Endothelial cell of umbilical vein (primary cell): ENCODE measurements at regions of chr3 and their contacts with region 1.

Region 1: GRCh38 chr3:101195951-101196713 is 124.2 kb downstream of the IMPG2 start:
- DNase-seq: peak; percentile 89
- H3K4me3 ChIP-seq: no peak overlapping the region
- H3K27ac ChIP-seq: peak overlapping the region; percentile 81
- H3K4me1 ChIP-seq: peaks cover 23% of the 10 kb centered on the region
- H3K27me3 ChIP-seq: no peaks in the 10 kb centered on the region
- CTCF ChIP-seq: peak; percentile 30 to 42
- POLR2A ChIP-seq: no peak

Region 2: DNA sequence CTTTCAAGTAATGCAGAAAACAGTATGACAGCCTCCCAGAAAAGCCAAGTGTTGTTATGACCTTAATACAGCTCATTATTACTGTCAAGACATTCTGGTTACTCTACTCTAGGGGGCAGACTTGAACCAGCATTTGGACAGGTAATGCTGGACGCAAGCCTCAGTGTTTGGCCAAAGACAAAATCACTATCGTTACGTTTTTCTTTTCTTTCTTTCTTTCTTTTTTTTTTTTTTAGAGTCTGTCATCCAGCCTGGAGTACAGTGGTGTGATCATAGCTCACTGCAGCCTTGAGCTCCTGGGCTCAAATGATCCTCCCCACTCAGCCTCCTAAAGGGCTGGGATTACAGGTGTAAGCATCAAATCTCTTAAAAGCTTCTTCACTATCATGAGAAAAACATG is 733.1 kb before region 1 on chr3:
- CTCF ChIA-PET with region 1: interaction called, 36 read pairs
- POLR2A ChIA-PET with region 1: no interaction called
- dilution Hi-C with region 1: no loop called
- intact Hi-C with region 1: loop called (anchors 5 kb)
- DNase-seq: peak; percentile 52
- H3K4me3 ChIP-seq: no peak overlapping the region
- H3K27ac ChIP-seq: no peak overlapping the region
- H3K4me1 ChIP-seq: no peaks in the 10 kb centered on the region
- H3K27me3 ChIP-seq: peaks cover 3 to 5% of the 10 kb centered on the region in 2 experiments
- CTCF ChIP-seq: peak; percentile 55 to 68
- POLR2A ChIP-seq: no peak

Region 3: GRCh38 chr3:100796556-100796955 is 399.6 kb before region 1 on chr3:
- CTCF ChIA-PET with region 1: interaction called, 26 read pairs
- POLR2A ChIA-PET with region 1: no interaction called
- dilution Hi-C with region 1: no loop called
- intact Hi-C with region 1: no loop called
- DNase-seq: peak; percentile 62
- H3K4me3 ChIP-seq: no peak overlapping the region
- H3K27ac ChIP-seq: no peak overlapping the region
- H3K4me1 ChIP-seq: peaks cover 12% of the 10 kb centered on the region
- H3K27me3 ChIP-seq: no peaks in the 10 kb centered on the region
- CTCF ChIP-seq: peak in 1 of 2 donors; percentile 21
- POLR2A ChIP-seq: no peak

Region 4: DNA sequence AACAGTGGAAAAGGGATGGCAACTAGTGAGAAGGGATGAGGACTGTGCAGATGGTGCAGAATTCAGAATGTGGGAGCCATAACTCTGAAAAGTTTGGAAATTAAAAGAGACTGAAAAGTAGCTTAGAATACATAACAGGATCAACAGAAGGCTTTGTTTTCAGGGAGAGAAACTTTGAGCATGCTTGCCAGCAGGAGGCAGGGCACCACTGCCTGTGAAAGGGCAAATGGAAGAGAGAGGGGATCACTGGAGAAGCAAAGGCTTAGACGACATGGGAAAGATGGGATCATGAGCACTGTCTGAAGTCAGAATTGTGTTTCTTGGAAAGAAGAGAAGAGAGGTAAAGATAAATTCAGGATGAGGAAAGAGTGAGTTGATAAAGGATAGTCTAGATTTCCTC is 302.5 kb before region 1 on chr3:
- CTCF ChIA-PET with region 1: interaction called, 257 read pairs
- POLR2A ChIA-PET with region 1: no interaction called
- dilution Hi-C with region 1: no loop called
- intact Hi-C with region 1: loop called (anchors 1 kb)
- DNase-seq: peak; percentile 74
- H3K4me3 ChIP-seq: no peak overlapping the region
- H3K27ac ChIP-seq: no peak overlapping the region
- H3K4me1 ChIP-seq: peaks cover 8% of the 10 kb centered on the region
- H3K27me3 ChIP-seq: no peaks in the 10 kb centered on the region
- CTCF ChIP-seq: peak; percentile 78 to 80
- POLR2A ChIP-seq: no peak

Region 5: GRCh38 chr3:100993309-100993708 is 202.8 kb before region 1 on chr3 and contains the start of gene ABI3BP:
- CTCF ChIA-PET with region 1: interaction called, 43 read pairs
- POLR2A ChIA-PET with region 1: no interaction called
- dilution Hi-C with region 1: no loop called
- intact Hi-C with region 1: loop called (anchors 2 kb)
- DNase-seq: peak; percentile 91
- H3K4me3 ChIP-seq: peak within 1 kb of the TSS; percentile 63 to 90 (median 77)
- H3K27ac ChIP-seq: peak within 1 kb of the TSS; percentile 51
- H3K4me1 ChIP-seq: peaks cover 14% of the 10 kb centered on the region
- H3K27me3 ChIP-seq: no peaks in the 10 kb centered on the region
- CTCF ChIP-seq: no peak
- POLR2A ChIP-seq: peak; percentile 74
- total RNA-seq, gene ABI3BP: 55.9 and 78.1 TPM in 2 replicates

Region 6: DNA sequence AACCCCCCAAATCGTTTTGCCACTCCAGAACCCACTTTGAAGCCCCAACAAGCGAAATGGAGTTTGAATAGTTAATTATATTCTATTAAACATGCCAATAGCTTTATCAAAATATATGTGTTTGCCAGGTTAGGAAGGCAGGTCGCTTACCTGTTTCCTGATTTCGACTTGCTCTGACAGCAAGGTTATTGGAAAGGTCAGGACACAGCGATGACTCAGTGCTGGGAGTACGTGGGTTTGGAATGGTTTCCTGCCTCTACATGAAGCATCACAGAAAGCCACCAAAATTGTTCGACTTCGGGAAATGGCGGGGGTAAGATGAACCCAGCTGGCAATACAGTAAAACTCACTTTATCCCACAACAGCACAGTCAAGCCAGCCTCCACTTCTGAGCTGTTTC is 67.3 kb before region 1 on chr3:
- CTCF ChIA-PET with region 1: interaction called, 10 read pairs
- POLR2A ChIA-PET with region 1: no interaction called
- dilution Hi-C with region 1: no loop called
- intact Hi-C with region 1: no loop called
- DNase-seq: peak; percentile 73
- H3K4me3 ChIP-seq: no peak overlapping the region
- H3K27ac ChIP-seq: no peak overlapping the region
- H3K4me1 ChIP-seq: peaks cover 12% of the 10 kb centered on the region
- H3K27me3 ChIP-seq: no peaks in the 10 kb centered on the region
- CTCF ChIP-seq: no peak
- POLR2A ChIP-seq: no peak